HepG2 (cell line): ENCODE measurements at regions of chrX and their contacts with region 1.

Region 1: DNA sequence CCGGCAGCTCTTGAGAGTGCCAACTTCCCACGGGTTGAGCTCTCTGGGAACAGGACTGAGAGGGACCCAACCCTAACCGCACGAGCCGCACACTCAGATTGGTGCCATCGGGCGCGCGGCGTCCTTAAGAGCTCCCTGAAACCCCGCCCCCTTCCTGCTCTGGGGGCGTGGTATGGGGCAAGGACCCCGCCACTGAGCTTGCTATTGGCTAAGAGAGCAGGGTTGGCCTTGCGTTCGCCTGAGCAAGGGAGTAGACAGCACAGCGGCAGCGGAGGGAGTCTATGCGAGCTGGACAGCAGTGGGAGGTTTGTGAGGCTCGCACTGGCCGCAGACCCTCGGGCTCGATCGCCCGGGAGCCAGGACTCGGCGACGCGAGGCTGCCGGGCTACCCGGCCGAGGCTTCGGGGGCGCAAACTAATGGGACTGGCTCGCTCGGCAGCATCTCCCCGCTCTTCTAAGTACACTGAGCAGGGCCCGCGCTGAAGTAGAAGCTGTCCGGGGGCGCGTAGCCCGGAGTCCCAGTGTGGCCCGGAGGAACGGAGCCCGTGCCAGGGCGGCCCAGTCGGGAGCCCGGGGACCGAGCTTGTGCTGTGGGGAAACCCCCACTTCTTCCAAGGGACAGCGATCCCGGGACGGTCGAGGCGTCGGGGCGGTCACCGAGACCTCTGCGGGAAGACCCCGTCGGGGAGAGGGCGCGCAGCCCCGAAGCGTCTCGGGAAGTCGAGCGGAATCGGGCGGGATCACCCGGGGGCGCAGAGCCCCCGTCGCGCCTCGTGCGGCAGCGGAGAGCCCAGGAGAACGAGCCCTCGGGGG is at the start of gene EFNB1:
- DNase-seq: peak; percentile 86
- ATAC-seq: peak; percentile 87
- H3K4me3 ChIP-seq: peak within 1 kb of the TSS; percentile 52 to 68 (median 63)
- H3K27ac ChIP-seq: no peak within 1 kb of the TSS
- H3K4me1 ChIP-seq: peaks cover 26% of the 10 kb centered on the region
- H3K27me3 ChIP-seq: no peaks in the 10 kb centered on the region
- CTCF ChIP-seq: no peak
- EP300 ChIP-seq: no peak
- POLR2A ChIP-seq: peak; percentile 80 to 90
- RAD21 ChIP-seq: no peak
- total RNA-seq, gene EFNB1: 2.9 and 4.1 TPM in 2 replicates

Region 2: DNA sequence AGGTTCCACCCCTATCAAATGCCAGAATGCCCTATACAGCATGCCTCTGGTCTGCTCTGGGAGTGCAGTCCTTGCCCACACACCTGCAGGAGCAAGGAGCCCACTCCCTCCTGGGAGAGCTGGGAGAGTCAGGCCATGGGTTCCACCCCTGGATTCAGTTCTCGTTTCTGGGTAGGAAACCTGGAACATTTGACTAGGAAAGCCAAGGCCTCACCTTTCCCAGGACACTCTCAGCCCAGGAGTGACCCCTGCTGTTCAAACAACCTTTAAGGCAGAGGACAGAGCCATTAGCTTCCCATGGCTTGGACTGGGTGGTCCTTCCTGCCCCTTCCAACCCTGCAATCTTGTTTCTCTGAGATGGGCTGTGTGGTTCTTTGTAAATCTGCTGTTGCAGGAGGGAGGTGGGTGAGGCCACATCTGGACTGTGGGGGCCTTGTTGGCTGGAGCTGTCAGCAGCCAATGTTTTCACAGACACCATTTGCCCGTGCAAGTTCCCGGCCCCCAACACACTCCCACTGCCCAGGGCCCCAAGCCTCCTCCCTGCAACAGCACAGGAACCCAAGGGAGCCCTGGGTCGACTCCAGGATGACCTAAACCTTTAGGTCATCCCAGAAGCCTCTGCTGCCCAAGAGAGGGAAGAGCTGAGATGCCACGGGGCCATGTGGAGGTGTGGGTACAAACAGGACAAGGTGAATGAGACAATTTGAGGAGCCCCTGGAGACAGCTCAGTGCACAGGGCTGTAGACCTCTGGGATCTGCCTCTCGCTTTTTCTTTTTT is 231.9 kb after region 1 on chrX:
- CTCF ChIA-PET with region 1: interaction called, 4 read pairs
- POLR2A ChIA-PET with region 1: no interaction called
- in situ Hi-C with region 1: loop called (anchors 10 kb)
- intact Hi-C with region 1: no loop called
- DNase-seq: peak; percentile 21
- ATAC-seq: peak; percentile 82
- H3K4me3 ChIP-seq: no peak overlapping the region
- H3K27ac ChIP-seq: no peak overlapping the region
- H3K4me1 ChIP-seq: no peaks in the 10 kb centered on the region
- H3K27me3 ChIP-seq: no peaks in the 10 kb centered on the region
- CTCF ChIP-seq: peak; percentile 63
- EP300 ChIP-seq: no peak
- POLR2A ChIP-seq: no peak
- RAD21 ChIP-seq: no peak

Region 3: GRCh38 chrX:69216911-69217310 is 388.0 kb after region 1 on chrX:
- CTCF ChIA-PET with region 1: no interaction called
- POLR2A ChIA-PET with region 1: interaction called, 3 read pairs
- in situ Hi-C with region 1: loop called (anchors 5 kb)
- intact Hi-C with region 1: no loop called
- DNase-seq: no peak
- ATAC-seq: no peak
- H3K4me3 ChIP-seq: no peak overlapping the region
- H3K27ac ChIP-seq: no peak overlapping the region
- H3K4me1 ChIP-seq: no peaks in the 10 kb centered on the region
- H3K27me3 ChIP-seq: no peaks in the 10 kb centered on the region
- CTCF ChIP-seq: no peak
- EP300 ChIP-seq: no peak
- POLR2A ChIP-seq: no peak
- RAD21 ChIP-seq: no peak

Region 4: GRCh38 chrX:69285881-69286564 is 457.1 kb after region 1 on chrX:
- CTCF ChIA-PET with region 1: interaction called, 3 read pairs
- POLR2A ChIA-PET with region 1: no interaction called
- in situ Hi-C with region 1: loop called (anchors 5 kb)
- intact Hi-C with region 1: loop called (anchors 2 kb)
- DNase-seq: no peak
- ATAC-seq: peak; percentile 86
- H3K4me3 ChIP-seq: peak overlapping the region in 1 of 3 experiments; percentile 33; a peak in 1 of 6 replicates
- H3K27ac ChIP-seq: no peak overlapping the region
- H3K4me1 ChIP-seq: peaks cover 26% of the 10 kb centered on the region
- H3K27me3 ChIP-seq: no peaks in the 10 kb centered on the region
- CTCF ChIP-seq: peak; percentile 88
- EP300 ChIP-seq: no peak
- POLR2A ChIP-seq: no peak
- RAD21 ChIP-seq: peak; percentile 69